Activated T-helper 2 cell treated with anti-CD3 and anti-CD28 coated beads, Interferon-gamma antibody, Interleukin-2, Interleukin-4, amounts not matched to agents 10 μg/mL and 5 μg/mL and 100 μg/mL, durations not matched to agents 14 hours and 24 hours and 36 hours (primary cell): ENCODE measurements at regions of chr9 and their contacts with region 1.

Region 1: DNA sequence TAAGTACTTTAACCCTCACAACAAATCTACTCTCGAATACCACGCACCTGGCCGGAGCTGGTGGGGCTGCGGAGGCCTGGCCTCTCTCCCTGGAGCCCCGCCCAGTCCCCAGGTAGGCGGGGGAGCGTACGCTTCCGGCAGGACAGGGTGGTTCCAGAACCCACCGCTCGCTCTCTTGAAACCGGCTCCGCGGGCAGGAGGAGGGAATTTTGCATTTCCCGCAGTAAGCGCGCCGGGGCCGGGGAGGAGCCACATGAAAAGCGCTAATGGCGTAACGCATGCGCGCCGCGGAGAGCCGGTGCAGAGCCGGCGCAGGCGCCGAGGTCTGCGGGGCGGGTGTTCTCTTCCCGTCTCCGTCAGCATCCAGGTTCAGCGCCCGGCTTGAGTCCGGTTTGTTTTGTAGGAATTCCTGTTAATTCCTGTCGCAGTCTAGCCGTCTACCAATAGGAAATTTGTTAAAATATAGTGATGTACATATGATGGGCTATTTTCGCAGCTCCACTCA is 20.8 kb downstream of the CAVIN4 start:
- DNase-seq: peak; percentile 69
- H3K4me3 Mint-ChIP-seq: peak overlapping the region; percentile 81
- H3K27ac Mint-ChIP-seq: no peak overlapping the region
- H3K4me1 Mint-ChIP-seq: peaks cover 17% of the 10 kb centered on the region
- H3K27me3 Mint-ChIP-seq: peaks cover 18% of the 10 kb centered on the region

Region 2: GRCh38 chr9:100028201-100028784 is 570.4 kb before region 1 on chr9:
- intact Hi-C with region 1: loop called (anchors 1 kb)
- DNase-seq: peak; percentile 50
- H3K4me3 Mint-ChIP-seq: no peak overlapping the region
- H3K27ac Mint-ChIP-seq: no peak overlapping the region
- H3K4me1 Mint-ChIP-seq: peaks cover 7% of the 10 kb centered on the region
- H3K27me3 Mint-ChIP-seq: no peaks in the 10 kb centered on the region

Region 3: GRCh38 chr9:100352727-100353505 is 245.8 kb before region 1 on chr9 and contains the start of gene TEX10:
- intact Hi-C with region 1: loop called (anchors 1 kb)
- DNase-seq: peak; percentile 86
- H3K4me3 Mint-ChIP-seq: peak within 1 kb of the TSS; percentile 96
- H3K27ac Mint-ChIP-seq: peak within 1 kb of the TSS; percentile 80
- H3K4me1 Mint-ChIP-seq: peaks cover 38% of the 10 kb centered on the region
- H3K27me3 Mint-ChIP-seq: no peaks in the 10 kb centered on the region
- total RNA-seq, gene TEX10: 26.9 and 30.0 TPM in 2 replicates

Region 4: DNA sequence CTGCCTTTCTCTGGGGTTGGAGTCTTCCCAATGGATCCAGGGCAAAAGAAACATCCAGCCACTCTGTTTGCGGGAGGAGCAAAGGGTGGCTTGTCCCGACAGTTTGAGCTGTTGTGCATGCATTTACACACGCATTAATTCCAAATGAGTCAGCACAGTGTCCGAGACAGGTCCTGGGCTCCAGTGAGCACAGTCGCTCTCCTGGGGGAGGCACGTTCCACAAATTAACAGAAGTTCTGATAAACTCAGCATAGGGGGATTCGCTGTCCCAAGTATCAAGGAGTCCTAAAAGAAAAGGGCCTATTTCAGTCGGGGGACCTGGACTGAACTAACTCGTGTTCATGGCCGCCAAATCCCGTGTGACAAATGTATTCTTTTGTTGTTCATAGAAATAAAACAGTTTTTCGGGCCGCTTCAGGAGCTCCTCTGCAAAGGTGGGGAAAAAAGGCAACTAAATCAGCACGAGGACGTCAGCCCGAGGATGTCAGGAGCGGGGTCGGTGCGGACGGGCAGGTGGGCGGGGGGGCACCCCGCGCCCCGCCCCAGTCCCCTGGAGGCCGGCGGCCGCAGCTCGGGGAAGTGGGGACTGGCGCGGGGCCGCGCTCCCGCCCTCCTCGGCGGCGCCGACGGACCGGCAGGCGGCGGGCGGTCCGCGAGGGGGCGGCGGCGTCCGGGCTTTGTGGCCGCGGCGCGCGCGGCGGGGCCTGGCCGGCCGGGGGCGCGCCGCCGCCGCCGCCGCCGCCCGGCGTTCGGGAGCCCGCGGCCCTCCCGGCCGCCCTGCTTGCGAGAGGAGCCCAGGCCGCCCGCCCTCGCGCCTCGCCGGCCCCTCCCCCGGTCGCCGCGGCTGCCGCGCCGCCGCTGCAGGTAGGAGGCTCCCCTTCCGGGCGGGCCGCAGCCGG is 171.9 kb before region 1 on chr9 and contains the start of gene MSANTD3:
- intact Hi-C with region 1: loop called (anchors 5 kb)
- DNase-seq: peak; percentile 50
- H3K4me3 Mint-ChIP-seq: peak within 1 kb of the TSS; percentile 85
- H3K27ac Mint-ChIP-seq: peak within 1 kb of the TSS; percentile 89
- H3K4me1 Mint-ChIP-seq: peaks cover 26% of the 10 kb centered on the region
- H3K27me3 Mint-ChIP-seq: peaks cover 11% of the 10 kb centered on the region
- total RNA-seq, gene MSANTD3: 16.2 and 17.6 TPM in 2 replicates

Region 5: DNA sequence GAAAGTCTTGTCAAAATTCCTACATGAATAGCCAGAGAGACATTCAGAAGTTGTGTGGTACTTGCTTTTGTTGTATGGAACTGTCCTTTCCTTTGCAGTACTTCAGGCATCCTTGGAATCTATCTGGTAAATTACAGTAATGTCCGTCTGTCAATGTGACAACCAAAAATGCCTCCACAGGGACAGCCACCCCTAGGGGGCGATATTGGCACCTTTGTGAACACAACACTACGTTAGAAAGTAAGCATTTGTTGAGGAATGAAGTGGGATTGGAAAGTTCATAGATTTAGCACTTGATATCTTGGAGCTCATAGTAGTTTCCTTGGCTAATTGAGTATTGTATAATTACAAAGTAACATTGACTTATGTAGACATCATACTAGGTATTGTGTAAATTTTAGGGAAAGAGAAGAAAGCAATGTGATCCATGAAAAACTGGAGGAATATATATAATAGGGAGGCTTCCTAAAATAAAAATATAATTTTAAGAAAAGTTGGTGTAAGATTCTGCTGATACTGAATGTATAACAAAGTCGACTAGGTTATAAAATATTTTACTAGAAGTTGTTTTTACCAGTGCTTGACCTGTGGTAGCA is 93.0 kb before region 1 on chr9:
- intact Hi-C with region 1: loop called (anchors 2 kb)
- DNase-seq: peak; percentile 42
- H3K4me3 Mint-ChIP-seq: no peak overlapping the region
- H3K27ac Mint-ChIP-seq: no peak overlapping the region
- H3K4me1 Mint-ChIP-seq: no peaks in the 10 kb centered on the region
- H3K27me3 Mint-ChIP-seq: peaks cover 8% of the 10 kb centered on the region

Region 6: GRCh38 chr9:101311758-101312420 is 713.2 kb after region 1 on chr9:
- intact Hi-C with region 1: loop called (anchors 5 kb)
- DNase-seq: no peak
- H3K4me3 Mint-ChIP-seq: no peak overlapping the region
- H3K27ac Mint-ChIP-seq: no peak overlapping the region
- H3K4me1 Mint-ChIP-seq: no peaks in the 10 kb centered on the region
- H3K27me3 Mint-ChIP-seq: no peaks in the 10 kb centered on the region

Region 7: GRCh38 chr9:101398068-101398929 is 799.6 kb after region 1 on chr9 and contains the starts of genes MRPL50 and ZNF189:
- intact Hi-C with region 1: loop called (anchors 5 kb)
- DNase-seq: peak; percentile 95
- H3K4me3 Mint-ChIP-seq: peak within 1 kb of the TSS; percentile 94
- H3K27ac Mint-ChIP-seq: peak within 1 kb of the TSS; percentile 96
- H3K4me1 Mint-ChIP-seq: peaks cover 41% of the 10 kb centered on the region
- H3K27me3 Mint-ChIP-seq: no peaks in the 10 kb centered on the region
- total RNA-seq, gene MRPL50: 14.2 and 14.8 TPM in 2 replicates
- total RNA-seq, gene ZNF189: 10.6 and 11.0 TPM in 2 replicates